ENCODE measurements at regions of chr17 and their contacts with region 1.

Region 1: DNA sequence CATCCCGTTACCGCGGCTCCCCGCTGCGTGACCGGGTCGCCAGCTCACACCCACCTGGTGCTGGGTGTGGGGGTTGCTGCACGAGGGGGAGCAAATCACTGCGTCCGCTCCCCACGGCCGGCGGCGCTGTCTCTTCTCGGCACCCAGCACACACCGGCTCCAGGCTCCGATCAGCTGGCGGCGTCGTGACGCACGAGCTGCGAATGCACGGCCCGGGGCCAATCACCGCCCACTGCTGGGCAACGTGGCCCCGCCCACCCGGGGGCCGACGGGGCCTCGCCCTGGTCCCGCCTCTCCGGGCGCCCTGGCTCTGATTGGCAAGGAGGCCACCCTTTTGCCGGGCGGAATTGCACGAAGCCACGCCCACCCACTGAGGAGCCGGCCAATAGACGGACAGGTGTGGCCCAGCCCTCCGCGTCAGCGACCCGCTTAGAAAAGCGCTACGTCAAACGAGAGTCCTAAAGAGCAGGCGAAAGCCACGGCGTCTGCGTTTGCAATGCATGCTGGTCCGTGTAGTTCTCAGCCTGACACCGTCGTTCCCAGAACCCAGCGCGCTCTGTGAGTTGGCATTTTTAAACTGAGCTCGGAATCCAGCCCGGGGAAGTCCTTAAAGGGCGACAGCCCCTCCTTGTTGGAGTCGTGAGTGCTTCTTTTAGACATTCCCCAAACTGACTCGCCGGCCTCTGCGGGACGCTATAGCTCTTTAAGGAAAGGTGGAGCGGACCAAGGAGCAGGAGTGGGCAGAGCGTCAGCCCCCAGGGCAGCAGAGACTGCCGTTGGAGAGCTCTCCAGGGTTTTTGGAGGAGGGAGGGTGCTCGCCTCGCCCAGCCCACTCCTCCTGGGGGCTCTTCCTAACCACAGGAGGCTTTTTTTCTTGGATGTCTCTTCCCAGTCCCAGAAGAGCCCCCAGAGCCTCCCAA is 6.2 kb upstream of the TLCD2 start:
- DNase-seq: peak; percentile 99

Region 2: DNA sequence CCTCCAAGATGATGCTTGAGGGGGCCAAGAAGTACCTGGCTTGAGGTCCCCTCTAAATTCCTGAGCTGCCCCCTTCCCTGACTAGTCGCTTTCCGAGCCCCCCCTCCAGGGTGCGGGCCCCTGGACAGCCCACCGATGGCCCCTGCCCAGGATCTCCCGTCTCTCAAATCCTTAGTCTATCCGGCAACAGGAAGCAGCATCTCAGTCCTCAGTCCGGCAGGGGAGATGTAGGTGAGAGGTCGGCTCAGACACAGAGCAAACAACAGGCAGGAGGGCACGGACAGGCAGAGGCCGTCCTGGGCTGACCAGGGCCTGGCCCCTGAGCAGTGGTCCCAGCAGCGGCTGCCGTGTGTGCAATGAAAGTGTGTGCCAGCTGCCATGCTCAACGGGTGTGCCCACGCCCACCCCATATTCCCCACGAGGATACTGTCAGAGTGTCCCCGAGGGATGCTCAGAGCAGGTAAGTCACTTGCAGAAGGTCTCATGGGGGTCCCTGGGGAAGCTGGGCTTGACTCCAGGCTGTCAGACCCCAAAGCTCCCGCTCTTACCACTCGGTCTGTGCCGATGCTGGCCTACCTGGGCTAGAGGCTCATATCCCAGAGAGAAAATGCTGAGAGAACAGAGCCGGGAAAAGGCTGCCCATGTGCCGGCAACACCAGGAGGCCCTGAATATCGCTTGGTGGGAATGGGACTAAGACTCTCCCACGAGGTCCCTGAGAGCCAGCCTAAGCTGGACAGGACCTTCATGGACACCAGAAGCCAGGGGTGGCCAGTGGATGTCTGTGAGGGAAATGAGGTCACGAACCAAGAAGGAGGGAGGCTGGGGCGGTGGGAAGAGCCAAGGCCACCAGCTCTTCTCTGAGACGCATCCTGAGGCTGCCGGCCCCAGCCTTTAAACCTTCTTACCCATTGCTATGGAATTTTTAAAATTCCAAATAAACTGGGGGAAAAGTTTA is 94.8 kb before region 1 on chr17:
- CTCF ChIA-PET with region 1: no interaction called
- POLR2A ChIA-PET with region 1: no interaction called
- DNase-seq: no peak

Region 3: GRCh38 chr17:1684378-1685189 is 31.8 kb before region 1 on chr17 and contains the start of gene PRPF8:
- CTCF ChIA-PET with region 1: interaction called, 8 read pairs
- POLR2A ChIA-PET with region 1: interaction called, 13 read pairs
- DNase-seq: peak; percentile 99

Region 4: DNA sequence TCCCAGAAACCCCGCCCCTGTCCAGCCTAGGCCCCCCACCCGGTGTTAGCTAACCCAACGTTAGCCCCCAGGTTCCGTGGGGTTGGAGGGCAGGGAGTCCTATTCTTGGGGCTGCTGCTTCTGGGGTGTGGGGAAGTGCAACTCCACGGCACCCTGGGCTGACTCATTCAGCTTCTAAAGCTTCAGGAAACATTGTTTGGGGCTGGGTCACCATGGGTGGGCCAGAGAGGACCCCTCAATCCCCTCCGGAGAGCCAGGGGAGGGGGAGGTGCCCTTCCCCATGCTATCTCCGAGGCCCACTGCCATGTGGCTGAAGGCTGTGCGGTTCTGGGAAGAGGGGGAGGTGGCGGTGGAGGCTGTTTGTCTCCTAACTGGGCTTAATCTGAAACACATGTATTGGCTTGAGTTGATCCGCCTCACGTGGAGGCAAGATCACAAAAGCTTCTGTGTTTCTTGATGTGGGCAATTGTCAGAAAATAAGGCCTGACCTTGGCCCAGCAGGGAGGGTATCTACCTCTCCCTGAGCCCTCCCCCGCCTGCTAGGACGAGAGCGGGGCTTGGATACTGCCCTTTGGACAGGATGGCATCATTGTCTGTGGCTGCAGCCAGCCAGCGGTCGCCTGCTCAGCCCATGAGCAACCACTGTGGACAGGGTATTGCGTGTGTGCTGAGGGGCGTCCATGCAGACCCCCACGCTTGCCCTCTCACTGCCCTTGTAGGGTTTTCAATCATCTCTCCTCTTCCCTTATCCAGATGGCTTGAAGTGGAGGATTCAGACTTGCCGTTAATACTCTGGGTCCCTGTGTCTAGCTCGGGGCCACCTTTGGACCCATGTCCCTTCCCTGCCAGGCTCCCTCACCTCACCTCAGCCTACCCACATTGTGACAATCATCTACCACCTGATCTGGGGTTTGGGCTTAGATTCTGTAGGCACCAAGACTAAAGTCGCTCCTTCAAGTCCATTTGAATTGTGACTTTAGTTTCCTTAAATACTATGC is 46.9 kb after region 1 on chr17:
- CTCF ChIA-PET with region 1: interaction called, 7 read pairs
- POLR2A ChIA-PET with region 1: interaction called, 13 read pairs
- DNase-seq: no peak

Region 5: DNA sequence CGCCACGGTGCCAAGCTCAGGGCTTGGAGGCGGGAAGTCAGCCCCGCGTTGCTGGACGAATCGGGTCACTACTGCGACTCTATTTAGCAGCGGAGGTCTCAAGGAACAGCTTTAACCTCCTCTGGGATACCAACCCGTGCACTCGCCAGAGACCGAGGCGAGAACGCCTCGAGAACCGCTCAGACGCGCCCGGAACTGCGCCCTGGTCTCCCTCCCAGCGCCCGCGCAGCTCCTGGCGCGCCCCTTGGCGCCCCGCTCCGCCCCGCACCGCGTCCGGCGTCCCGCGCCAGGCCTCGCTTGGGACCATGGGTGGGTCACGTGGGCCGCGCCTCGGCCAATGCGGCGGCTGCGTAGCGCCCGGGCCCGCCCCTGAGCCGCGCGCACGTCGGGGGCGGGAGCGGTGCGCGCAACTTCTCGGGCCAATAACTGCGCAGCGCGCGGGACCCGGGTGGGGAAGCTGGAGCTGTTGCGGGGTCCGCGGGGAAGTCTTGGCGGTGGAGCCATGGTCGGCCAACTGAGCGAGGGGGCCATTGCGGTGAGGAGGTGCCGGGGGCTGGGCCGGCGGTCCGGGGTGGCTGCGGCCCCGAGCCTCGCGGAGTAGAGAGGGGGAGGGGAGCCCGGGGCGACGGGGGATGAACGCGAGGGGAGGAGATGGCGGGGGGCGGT is 113.4 kb after region 1 on chr17 and contains the starts of genes RPA1 and SMYD4:
- CTCF ChIA-PET with region 1: no interaction called
- POLR2A ChIA-PET with region 1: interaction called, 29 read pairs
- DNase-seq: peak; percentile 97